AG04449 (cell line): ENCODE measurements at regions of chr20 and their contacts with region 1.

Region 1: DNA sequence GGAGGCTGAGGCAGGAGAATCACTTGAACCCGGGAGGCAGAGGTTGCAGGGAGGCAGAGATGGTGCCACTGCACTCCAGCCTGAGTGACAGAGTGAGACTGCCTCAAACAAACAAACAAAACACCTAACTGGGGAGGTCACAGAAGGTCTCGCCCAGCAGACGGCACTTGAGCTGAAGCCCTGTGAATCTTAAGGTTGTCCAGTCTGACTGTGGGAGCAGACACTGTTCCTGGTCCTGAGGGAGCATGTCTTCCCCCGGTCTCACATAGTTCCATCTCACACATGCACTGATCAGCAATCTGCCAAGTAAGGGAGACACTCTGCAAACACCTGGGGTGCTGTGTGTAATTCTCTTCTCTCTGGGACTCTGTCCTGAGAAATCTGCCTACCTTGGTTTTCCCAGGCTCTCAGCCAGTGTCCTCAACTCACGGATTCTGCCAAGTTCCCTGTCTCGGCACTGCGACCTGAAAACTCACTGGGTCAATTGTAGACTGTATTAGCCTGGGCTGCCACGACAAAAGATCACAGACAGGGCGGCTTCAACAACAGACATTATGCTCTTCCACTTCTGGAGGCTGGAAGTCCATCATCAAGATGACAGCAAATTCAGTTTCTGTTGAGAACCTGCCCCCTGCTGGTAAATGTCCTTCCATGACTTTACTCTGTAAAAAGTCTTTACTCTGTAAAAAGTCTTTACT is 94.3 kb downstream of the JPH2 start:
- DNase-seq: no peak
- H3K4me3 ChIP-seq: no peak overlapping the region
- CTCF ChIP-seq: peak; percentile 33

Region 2: GRCh38 chr20:43448748-43449535 is 643.8 kb before region 1 on chr20:
- CTCF ChIA-PET with region 1: interaction called, 51 read pairs
- POLR2A ChIA-PET with region 1: no interaction called
- DNase-seq: no peak
- H3K4me3 ChIP-seq: no peak overlapping the region
- CTCF ChIP-seq: peak; percentile 72

Region 3: GRCh38 chr20:44011251-44011940 is 81.3 kb before region 1 on chr20:
- CTCF ChIA-PET with region 1: no interaction called
- POLR2A ChIA-PET with region 1: no interaction called
- DNase-seq: no peak
- H3K4me3 ChIP-seq: no peak overlapping the region
- CTCF ChIP-seq: no peak

Region 4: DNA sequence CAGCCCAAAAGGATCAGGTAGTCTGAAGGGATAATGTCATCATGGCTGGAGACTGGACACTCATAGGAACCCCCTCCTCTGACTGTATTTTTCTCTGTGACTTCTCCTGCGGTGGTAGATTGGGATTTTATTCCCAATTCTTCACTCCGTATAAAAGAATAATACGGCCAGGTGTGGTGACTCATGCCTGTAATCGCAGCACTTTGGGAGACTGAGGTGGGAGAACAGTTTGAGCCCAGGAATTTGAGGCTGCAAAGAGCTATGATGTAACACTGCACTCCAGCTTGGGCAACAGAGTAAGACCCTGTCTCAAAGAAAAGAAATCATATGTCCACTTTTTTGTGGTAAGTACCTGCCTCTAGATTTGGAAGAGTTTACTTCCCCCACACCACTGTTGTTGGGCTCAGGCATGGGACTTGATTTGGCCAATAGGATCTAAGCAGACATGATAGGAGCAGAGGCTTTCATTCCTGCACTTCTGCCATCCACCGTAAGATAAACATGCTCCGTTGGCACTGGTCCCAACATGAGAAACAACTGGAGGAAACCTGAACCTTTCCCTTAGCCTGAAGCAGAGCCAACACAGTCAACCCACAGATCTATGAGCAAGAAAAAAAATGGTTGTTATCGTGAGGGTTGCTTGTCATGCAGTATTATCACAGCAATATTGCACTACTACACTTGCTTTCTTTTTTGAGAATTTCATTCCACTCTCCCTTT is 12.3 kb after region 1 on chr20:
- CTCF ChIA-PET with region 1: interaction called, 15 read pairs
- POLR2A ChIA-PET with region 1: no interaction called
- DNase-seq: no peak
- H3K4me3 ChIP-seq: no peak overlapping the region
- CTCF ChIP-seq: no peak

Region 5: DNA sequence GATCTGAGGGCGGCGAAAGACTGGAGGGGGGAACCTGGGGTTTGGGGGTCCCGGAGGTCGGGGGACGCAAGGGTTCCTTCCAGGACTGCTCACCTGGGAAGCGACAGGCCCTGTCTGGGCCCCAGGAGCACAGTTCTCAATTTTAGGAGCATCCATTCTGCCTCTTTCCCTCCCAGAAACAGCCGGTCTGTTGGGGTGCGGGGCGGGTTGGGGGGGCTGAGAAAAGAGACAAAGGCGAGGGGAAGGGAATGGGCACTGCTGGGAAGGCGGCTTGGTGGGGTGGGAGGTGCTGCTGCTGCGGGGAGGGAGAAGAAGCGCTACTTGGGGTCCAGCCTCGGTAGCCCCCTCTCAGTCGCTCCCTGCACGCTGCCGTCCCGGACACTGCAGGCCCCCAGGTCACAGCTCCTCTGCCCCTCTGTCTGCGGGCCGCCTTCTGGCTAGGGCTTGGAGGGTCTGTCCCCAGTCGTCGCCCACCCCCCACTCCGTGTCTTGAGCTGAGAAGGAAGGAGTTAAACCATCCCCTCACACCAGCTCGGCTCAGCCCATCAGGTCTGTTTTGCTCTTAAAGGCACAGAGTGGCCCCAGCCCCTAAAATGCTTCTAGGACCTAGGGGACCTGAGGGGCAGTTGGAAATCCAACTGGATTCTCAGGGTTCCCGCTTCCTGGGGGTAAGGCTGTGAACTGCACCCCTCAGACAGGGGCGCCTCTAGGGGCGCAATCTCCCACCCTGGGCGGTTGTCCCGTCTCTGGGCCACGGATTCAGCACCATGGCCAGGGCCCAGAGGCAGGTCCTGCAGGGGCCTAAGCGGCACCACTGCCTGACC is 155.1 kb after region 1 on chr20:
- CTCF ChIA-PET with region 1: no interaction called
- POLR2A ChIA-PET with region 1: no interaction called
- DNase-seq: no peak
- H3K4me3 ChIP-seq: no peak overlapping the region
- CTCF ChIP-seq: peak; percentile 54